Mammary epithelial cell (primary cell): ENCODE measurements at regions of chr11 and their contacts with region 1.

Region 1: DNA sequence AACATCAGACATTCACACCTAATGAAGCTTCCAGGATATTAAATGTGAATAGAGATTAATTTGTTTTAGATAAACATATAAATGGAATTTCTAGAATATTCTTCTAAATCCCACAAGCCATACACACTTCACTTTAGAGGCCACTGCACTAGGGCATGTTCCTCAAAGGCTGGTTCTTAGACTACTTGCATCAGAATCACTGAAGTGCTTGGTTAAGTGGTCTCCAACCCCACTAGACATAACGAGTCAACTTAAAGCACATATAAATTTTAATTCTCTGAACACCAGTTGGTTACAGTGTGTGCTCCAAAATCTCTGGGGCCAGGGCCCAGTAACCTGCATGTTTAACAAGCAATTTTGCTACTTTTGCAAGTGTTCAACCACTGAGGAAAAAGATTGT is 7.9 kb upstream of the ALKBH8 start:
- DNase-seq: no peak
- H3K4me3 ChIP-seq: no peak overlapping the region
- H3K27ac ChIP-seq: no peak overlapping the region
- H3K4me1 ChIP-seq: no peaks in the 10 kb centered on the region
- H3K27me3 ChIP-seq: no peaks in the 10 kb centered on the region
- CTCF ChIP-seq: no peak

Region 2: GRCh38 chr11:107590460-107591377 is 17.3 kb after region 1 on chr11 and contains the start of gene ELMOD1:
- CTCF ChIA-PET with region 1: no interaction called
- dilution Hi-C with region 1: no loop called
- in situ Hi-C with region 1: no loop called
- intact Hi-C with region 1: loop called (anchors 2 kb)
- DNase-seq: peak; percentile 27
- H3K4me3 ChIP-seq: peak within 1 kb of the TSS; percentile 39 to 77 (median 55)
- H3K27ac ChIP-seq: no peak within 1 kb of the TSS
- H3K4me1 ChIP-seq: peaks cover 12% of the 10 kb centered on the region
- H3K27me3 ChIP-seq: peaks cover 14% of the 10 kb centered on the region
- CTCF ChIP-seq: peak in 1 of 2 donors; percentile 33
- total RNA-seq, gene ELMOD1: 0.17 to 0.21 TPM

Region 3: DNA sequence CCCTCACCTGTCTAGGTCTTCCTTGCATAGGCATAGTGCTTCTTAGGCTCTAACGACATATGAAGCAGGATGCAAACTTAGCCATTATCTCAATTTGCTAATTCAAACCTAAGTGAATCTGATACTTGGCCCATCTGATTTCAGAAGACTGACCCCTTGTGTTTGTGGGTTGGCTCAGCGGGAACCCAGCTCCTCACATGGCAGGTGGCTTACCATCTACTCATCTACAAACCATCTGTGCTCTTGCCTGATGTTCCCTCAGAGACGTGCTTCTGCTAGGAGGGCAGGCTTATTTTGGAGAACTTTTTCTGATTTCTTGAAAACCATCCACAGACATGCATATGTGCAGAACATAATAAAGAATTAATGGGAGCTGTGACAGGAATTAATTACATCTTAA is 32.7 kb after region 1 on chr11:
- CTCF ChIA-PET with region 1: no interaction called
- dilution Hi-C with region 1: no loop called
- in situ Hi-C with region 1: no loop called
- intact Hi-C with region 1: loop called (anchors 2 kb)
- DNase-seq: no peak
- H3K4me3 ChIP-seq: no peak overlapping the region
- H3K27ac ChIP-seq: no peak overlapping the region
- H3K4me1 ChIP-seq: no peaks in the 10 kb centered on the region
- H3K27me3 ChIP-seq: peaks cover 7% of the 10 kb centered on the region
- CTCF ChIP-seq: peak in 1 of 2 donors; percentile 9

Region 4: DNA sequence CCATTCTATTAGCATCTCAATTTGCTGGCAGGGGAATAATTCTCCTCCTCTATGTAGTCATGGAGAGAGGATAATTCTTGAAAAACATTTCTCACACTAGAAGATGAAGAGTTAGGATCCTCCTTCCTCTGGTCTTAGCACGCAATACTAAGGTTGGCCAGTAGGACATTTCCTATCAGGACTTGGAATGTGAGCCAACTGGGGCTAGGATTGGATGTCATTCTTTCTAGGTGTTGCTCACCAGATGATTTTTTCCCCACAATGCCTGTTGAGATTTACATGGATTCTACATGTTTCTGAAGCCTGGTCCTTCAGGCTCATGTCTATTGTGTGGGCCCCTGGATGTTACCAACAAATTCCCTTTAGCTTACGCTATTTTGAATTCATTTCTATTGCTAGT is 110.4 kb after region 1 on chr11:
- CTCF ChIA-PET with region 1: no interaction called
- dilution Hi-C with region 1: no loop called
- in situ Hi-C with region 1: loop called (anchors 5 to 10 kb)
- intact Hi-C with region 1: loop called (anchors 1 kb)
- DNase-seq: peak; percentile 9
- H3K4me3 ChIP-seq: no peak overlapping the region
- H3K27ac ChIP-seq: no peak overlapping the region
- H3K4me1 ChIP-seq: peaks cover 7% of the 10 kb centered on the region
- H3K27me3 ChIP-seq: no peaks in the 10 kb centered on the region
- CTCF ChIP-seq: peak; percentile 39 to 47

Region 5: DNA sequence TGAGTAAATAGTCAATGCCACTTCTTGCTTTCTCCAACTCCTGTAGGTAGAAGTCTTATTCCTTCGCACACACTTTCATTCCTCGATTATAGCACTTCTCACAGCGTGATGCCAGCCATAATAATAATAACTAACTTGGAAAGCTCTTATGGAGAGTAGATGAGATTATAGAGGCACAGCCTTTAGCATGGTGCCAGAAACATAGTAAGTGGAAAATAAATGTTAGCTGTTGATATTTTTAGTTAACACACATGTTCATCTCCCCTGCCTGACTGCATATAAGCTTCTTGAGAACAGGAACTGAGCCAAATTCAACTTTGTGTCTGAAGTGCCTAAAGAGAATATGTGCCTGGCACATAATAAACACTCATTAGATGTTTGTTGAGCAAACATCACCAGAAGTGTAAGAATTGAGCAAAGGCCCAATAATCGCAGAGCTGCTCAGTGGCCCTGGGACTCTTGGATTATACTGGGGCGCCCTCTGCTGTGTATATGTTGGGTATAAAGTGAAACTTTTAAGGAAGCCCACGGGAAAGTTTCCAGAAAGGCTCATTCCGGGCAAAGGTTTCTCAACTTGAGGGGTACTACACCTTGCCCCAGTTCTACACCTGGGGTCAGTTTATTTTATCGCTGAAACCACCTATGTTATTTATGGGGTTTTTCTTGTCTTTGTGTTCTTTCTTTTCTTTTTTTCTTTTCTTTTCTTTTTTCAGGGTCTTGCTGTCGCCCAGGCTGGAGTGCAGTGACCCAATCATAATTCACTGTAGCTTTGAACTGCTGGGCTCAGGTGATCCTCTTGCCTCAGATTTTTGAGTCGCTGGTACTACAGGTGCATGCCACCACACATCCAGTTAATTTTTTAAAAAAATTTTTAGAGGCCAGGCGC is 116.1 kb after region 1 on chr11:
- CTCF ChIA-PET with region 1: no interaction called
- dilution Hi-C with region 1: no loop called
- in situ Hi-C with region 1: loop called (anchors 5 to 10 kb)
- intact Hi-C with region 1: loop called (anchors 1 kb)
- DNase-seq: peak; percentile 34
- H3K4me3 ChIP-seq: no peak overlapping the region
- H3K27ac ChIP-seq: no peak overlapping the region
- H3K4me1 ChIP-seq: no peaks in the 10 kb centered on the region
- H3K27me3 ChIP-seq: no peaks in the 10 kb centered on the region
- CTCF ChIP-seq: peak; percentile 28 to 72

Region 6: DNA sequence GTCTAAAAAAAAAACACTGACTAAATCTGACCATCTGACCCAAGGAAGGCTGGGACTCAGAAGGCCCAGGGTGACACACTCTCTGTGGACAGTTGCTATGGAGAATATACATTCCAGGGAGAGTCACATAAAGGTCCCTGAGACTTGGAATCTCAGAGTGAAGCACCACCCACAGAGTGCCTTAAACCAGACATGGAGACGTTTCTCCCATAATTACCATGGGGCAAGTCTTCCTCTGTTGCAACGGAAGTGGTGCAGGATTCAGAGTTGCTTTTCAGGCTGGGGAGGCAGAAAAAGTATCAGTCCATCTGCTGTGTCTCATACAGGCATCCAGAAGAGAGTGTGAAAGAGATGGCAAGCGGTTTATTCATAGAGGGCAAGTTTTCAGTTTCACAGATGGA is 197.1 kb after region 1 on chr11:
- CTCF ChIA-PET with region 1: no interaction called
- dilution Hi-C with region 1: no loop called
- in situ Hi-C with region 1: no loop called
- intact Hi-C with region 1: loop called (anchors 1 kb)
- DNase-seq: no peak
- H3K4me3 ChIP-seq: no peak overlapping the region
- H3K27ac ChIP-seq: no peak overlapping the region
- H3K4me1 ChIP-seq: no peaks in the 10 kb centered on the region
- H3K27me3 ChIP-seq: no peaks in the 10 kb centered on the region
- CTCF ChIP-seq: no peak

Region 7: GRCh38 chr11:107898270-107898669 is 324.8 kb after region 1 on chr11:
- CTCF ChIA-PET with region 1: no interaction called
- dilution Hi-C with region 1: no loop called
- in situ Hi-C with region 1: no loop called
- intact Hi-C with region 1: loop called (anchors 5 kb)
- DNase-seq: peak; percentile 35
- H3K4me3 ChIP-seq: no peak overlapping the region
- H3K27ac ChIP-seq: no peak overlapping the region
- H3K4me1 ChIP-seq: no peaks in the 10 kb centered on the region
- H3K27me3 ChIP-seq: no peaks in the 10 kb centered on the region
- CTCF ChIP-seq: peak; percentile 67 to 86